Activated CD4-positive, alpha-beta T cell treated with anti-CD3 and anti-CD28 coated beads, Interleukin-2, amount 10 ng/mL, durations not matched to agents 24 days and 14 days (primary cell): ENCODE measurements at regions of chr1 and their contacts with region 1.

Region 1: GRCh38 chr1:184754476-184755225 is at the start of gene EDEM3:
- DNase-seq: peak; percentile 99
- H3K4me3 Mint-ChIP-seq: peak within 1 kb of the TSS; percentile 98
- H3K27ac Mint-ChIP-seq: peak within 1 kb of the TSS; percentile 96
- H3K4me1 Mint-ChIP-seq: peaks cover 23% of the 10 kb centered on the region
- H3K27me3 Mint-ChIP-seq: peaks cover 7% of the 10 kb centered on the region
- total RNA-seq, gene EDEM3: 23.6 and 28.3 TPM in 2 replicates

Region 2: GRCh38 chr1:183635606-183636333 is 1118.9 kb before region 1 on chr1 and contains the start of gene ARPC5:
- intact Hi-C with region 1: loop called (anchors 10 kb)
- DNase-seq: peak; percentile 99
- H3K4me3 Mint-ChIP-seq: peak within 1 kb of the TSS; percentile 98
- H3K27ac Mint-ChIP-seq: peak within 1 kb of the TSS; percentile 100
- H3K4me1 Mint-ChIP-seq: peaks cover 29% of the 10 kb centered on the region
- H3K27me3 Mint-ChIP-seq: peaks cover 11% of the 10 kb centered on the region
- total RNA-seq, gene ARPC5: 144 and 149 TPM in 2 replicates

Region 3: GRCh38 chr1:184743062-184743756 is 11.4 kb before region 1 on chr1:
- intact Hi-C with region 1: loop called (anchors 1 kb)
- DNase-seq: peak; percentile 74
- H3K4me3 Mint-ChIP-seq: peak overlapping the region; percentile 56
- H3K27ac Mint-ChIP-seq: peak overlapping the region; percentile 68
- H3K4me1 Mint-ChIP-seq: peaks cover 25% of the 10 kb centered on the region
- H3K27me3 Mint-ChIP-seq: no peaks in the 10 kb centered on the region

Region 4: GRCh38 chr1:184881941-184882913 is 127.6 kb after region 1 on chr1:
- intact Hi-C with region 1: loop called (anchors 2 kb)
- DNase-seq: no peak
- H3K4me3 Mint-ChIP-seq: peak overlapping the region; percentile 32
- H3K27ac Mint-ChIP-seq: peak overlapping the region; percentile 90
- H3K4me1 Mint-ChIP-seq: peaks cover 22% of the 10 kb centered on the region
- H3K27me3 Mint-ChIP-seq: no peaks in the 10 kb centered on the region

Region 5: DNA sequence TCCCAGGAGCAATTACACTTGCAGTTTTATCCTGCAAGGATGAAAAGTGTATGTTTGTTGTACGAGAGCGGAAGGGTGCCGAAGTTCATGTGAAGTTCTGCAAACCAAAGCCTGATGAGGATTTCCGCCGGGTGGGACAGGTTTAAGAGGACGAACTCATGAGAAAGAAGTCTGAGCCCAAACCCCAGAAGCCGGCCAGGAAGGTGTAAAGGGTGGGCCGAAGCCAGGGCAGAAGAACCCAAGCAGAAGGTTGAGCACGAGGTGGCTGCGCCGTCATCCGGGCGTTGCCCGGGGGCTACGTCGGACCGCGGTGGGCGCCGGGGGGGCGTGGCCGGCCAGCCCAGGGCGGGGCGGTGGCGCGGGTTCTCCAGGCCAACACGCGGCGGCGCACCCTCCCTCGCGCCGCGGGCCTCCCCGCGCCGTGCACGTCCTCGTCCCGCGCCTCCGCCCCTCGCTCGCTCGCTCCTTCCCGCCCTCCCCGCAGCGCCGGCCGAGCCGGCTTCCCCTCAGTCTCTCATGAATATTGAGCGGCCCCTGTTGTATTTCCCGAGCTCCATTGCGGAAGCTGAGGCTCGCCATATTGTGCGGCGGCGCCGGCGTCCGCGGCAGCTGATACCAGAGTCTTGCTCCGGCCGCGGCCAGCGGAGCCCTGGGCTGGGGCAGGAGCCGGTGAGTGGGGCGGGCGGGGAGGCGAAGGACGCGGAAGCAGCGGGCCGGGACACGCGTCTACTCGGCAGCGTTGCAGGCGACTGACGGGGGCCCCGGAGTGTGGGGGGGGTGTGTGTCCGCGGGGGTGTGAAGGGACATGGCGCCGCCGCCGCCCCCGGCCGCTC is 290.5 kb after region 1 on chr1 and contains the start of gene RNF2:
- intact Hi-C with region 1: loop called (anchors 2 kb)
- DNase-seq: peak; percentile 91
- H3K4me3 Mint-ChIP-seq: peak within 1 kb of the TSS; percentile 93
- H3K27ac Mint-ChIP-seq: peak within 1 kb of the TSS; percentile 91
- H3K4me1 Mint-ChIP-seq: peaks cover 26% of the 10 kb centered on the region
- H3K27me3 Mint-ChIP-seq: peaks cover 18% of the 10 kb centered on the region
- total RNA-seq, gene RNF2: 17.8 and 21.1 TPM in 2 replicates